HCT116 (cell line): ENCODE measurements at regions of chr20 and their contacts with region 1.

Region 1: GRCh38 chr20:32779500-32780211 is 17.5 kb downstream of the DNMT3B start:
- DNase-seq: no peak
- ATAC-seq: no peak
- H3K4me3 ChIP-seq: no peak overlapping the region
- H3K27ac ChIP-seq: no peak overlapping the region
- H3K4me1 ChIP-seq: peaks cover 13% of the 10 kb centered on the region in 2 experiments; a peak in 3 of 4 replicates
- H3K27me3 ChIP-seq: no peaks in the 10 kb centered on the region
- CTCF ChIP-seq: no peak
- POLR2A ChIP-seq: no peak
- RAD21 ChIP-seq: no peak

Region 2: DNA sequence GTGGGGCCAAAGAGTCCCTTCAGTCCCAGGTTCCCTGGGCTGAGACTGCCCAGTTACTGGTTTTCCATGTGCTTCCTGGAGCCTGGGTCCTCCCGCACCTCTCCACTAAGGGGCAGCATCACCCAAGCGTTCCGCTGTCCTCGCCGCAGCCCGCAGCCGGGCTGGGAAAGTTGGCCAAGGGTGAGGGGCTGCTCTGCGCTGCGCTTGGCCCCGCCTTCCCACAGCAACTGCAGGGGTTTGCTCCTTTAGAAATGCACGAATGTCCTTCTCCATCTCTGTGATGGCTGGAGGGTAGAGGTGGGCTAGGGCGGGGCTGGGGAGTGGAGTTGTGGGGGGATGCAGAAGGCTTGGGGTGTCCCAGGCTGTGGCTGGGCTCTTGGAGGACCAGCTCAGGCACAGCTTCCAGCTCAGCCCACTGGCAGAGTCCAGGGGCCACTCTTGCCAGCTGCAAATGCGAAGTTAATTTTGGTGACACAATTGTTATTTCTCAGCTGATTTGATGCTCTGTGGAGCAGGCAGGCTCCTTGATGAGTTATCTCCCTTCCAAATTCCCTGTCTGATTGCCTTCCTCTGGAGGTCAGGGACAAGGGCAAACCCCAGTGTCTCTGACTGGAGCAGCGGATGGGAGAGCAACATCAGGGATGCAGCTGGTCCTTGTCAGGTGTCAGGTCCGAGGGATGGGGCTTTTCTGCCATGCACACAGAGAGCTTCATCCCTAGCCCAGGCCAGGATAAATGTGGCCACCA is 257.7 kb before region 1 on chr20:
- CTCF ChIA-PET with region 1: interaction called, 5 read pairs
- POLR2A ChIA-PET with region 1: no interaction called
- RAD21 ChIA-PET with region 1: no interaction called
- intact Hi-C with region 1: loop called (anchors 10 kb)
- DNase-seq: peak; percentile 15
- ATAC-seq: peak; percentile 97
- H3K4me3 ChIP-seq: no peak overlapping the region
- H3K27ac ChIP-seq: no peak overlapping the region
- H3K4me1 ChIP-seq: 0 out of 4 replicates have a peak, but pooled peaks cover 0 to 3% of the 10 kb centered on the region in 2 experiments
- H3K27me3 ChIP-seq: no peaks in the 10 kb centered on the region
- CTCF ChIP-seq: peak; percentile 86 to 93 (median 88)
- POLR2A ChIP-seq: no peak
- RAD21 ChIP-seq: peak; percentile 99

Region 3: GRCh38 chr20:32674362-32674789 is 105.3 kb before region 1 on chr20:
- CTCF ChIA-PET with region 1: interaction called, 185 read pairs
- POLR2A ChIA-PET with region 1: interaction called, 11 read pairs
- RAD21 ChIA-PET with region 1: interaction called, 30 to 38 read pairs
- intact Hi-C with region 1: loop called (anchors 1 kb)
- DNase-seq: peak; percentile 40
- ATAC-seq: peak; percentile 93
- H3K4me3 ChIP-seq: no peak overlapping the region
- H3K27ac ChIP-seq: no peak overlapping the region
- H3K4me1 ChIP-seq: peaks cover 3 to 7% of the 10 kb centered on the region in 2 experiments; a peak in 1 of 4 replicates
- H3K27me3 ChIP-seq: no peaks in the 10 kb centered on the region
- CTCF ChIP-seq: peak; percentile 77 to 97 (median 83)
- POLR2A ChIP-seq: no peak
- RAD21 ChIP-seq: peak; percentile 97

Region 4: DNA sequence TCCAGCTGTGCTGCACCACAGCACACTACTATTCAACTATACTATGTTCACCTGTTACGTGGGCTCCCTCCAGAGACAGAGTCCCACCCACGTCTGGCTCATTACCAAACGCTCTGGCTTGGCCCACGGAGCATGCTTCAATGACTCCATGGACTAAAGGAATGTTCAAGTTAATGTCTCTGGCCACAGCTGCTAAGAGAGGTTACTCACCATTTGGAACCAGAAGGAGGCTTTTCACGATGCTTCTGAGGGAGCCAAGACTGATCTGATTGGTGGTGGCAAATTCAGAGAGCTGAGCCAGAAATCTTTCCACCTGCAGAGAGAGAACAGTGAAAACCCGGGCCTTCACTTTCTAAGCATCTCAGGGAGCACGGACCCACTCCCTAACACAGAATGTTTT is 52.0 kb before region 1 on chr20:
- CTCF ChIA-PET with region 1: interaction called, 10 read pairs
- POLR2A ChIA-PET with region 1: no interaction called
- RAD21 ChIA-PET with region 1: no interaction called
- intact Hi-C with region 1: no loop called
- DNase-seq: no peak
- ATAC-seq: no peak
- H3K4me3 ChIP-seq: no peak overlapping the region
- H3K27ac ChIP-seq: no peak overlapping the region
- H3K4me1 ChIP-seq: peaks cover 18 to 21% of the 10 kb centered on the region in 2 experiments
- H3K27me3 ChIP-seq: no peaks in the 10 kb centered on the region
- CTCF ChIP-seq: no peak
- POLR2A ChIP-seq: no peak
- RAD21 ChIP-seq: no peak

Region 5: DNA sequence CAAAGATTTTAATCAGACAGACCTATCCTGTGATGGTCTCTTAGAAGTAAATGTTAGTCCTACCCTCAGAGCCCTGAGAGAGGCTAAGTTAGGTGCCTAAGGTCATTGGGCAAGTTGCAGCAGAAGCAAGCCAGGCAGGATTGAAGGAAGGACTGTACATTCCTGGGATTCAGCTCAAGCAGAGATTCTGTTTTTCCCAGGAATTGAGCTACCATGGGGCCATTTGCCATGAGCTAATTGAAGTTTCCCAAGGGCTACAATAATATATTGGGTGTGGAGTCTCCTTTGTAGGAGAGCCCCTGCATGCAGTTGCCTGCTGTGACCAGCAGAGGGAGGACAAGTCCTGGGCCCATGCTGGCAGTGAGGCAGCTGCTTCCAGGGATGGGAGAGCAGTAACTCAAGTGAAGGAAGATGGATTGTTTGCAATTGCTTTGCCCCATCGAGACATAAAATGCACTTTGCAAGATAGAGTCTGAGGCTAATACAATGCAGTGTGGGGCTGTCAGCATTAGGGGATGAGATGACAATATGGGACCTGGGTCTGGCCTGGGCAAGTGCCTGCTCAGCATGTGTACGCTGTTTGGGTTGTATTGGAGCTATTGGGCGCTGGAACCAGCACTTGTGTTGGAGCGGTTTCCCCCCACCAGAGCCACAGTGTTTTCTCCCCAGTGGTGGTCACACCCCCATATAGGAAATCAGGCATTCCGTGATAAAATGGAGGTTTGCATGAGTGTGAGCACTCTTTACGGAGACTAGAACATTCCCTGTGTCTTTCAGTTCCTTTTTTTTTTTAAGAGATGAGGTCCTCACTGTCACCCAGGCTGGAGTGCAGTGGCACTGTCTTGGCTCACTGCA is 10.5 kb after region 1 on chr20:
- CTCF ChIA-PET with region 1: interaction called, 21 read pairs
- POLR2A ChIA-PET with region 1: no interaction called
- RAD21 ChIA-PET with region 1: no interaction called
- intact Hi-C with region 1: no loop called
- DNase-seq: no peak
- ATAC-seq: peak; percentile 96
- H3K4me3 ChIP-seq: no peak overlapping the region
- H3K27ac ChIP-seq: no peak overlapping the region
- H3K4me1 ChIP-seq: no peaks in the 10 kb centered on the region
- H3K27me3 ChIP-seq: no peaks in the 10 kb centered on the region
- CTCF ChIP-seq: peak; percentile 76 to 99 (median 97); a peak in 5 of 6 replicates
- POLR2A ChIP-seq: no peak
- RAD21 ChIP-seq: peak; percentile 73